ENCODE measurements at regions of chr1 and their contacts with region 1.

Region 1: GRCh38 chr1:205523891-205524793 is 19.7 kb downstream of the CDK18 start:
- DNase-seq: peak; percentile 62
- H3K4me3 ChIP-seq: no peak overlapping the region
- H3K27ac ChIP-seq: no peak overlapping the region
- H3K4me1 ChIP-seq: no peaks in the 10 kb centered on the region
- H3K27me3 ChIP-seq: peaks cover 0 to 4% of the 10 kb centered on the region in 2 experiments
- CTCF ChIP-seq: peak; percentile 70 to 80
- POLR2A ChIP-seq: no peak

Region 2: DNA sequence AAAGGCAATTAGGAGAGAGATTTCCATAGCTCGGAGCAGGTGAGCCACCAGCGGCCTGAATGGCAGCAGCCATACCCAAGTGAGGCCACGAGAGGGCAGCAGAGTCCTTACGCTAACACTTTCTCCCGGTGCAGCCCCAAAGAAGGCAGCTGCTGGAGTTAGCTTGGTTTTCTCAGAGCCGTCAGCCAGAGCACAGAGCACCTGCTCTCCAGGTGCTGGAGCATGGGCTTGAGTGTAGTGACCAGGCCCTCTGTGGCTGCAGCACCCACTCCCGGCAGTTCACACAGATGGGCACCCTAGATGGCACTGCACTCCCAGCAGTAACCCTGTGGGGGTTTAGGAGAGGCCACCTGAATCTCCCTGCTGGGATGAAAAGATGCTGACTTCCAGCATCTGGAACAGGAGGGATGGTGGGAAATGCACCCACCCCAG is 250.6 kb before region 1 on chr1:
- CTCF ChIA-PET with region 1: interaction called, 48 read pairs
- POLR2A ChIA-PET with region 1: no interaction called
- dilution Hi-C with region 1: no loop called
- intact Hi-C with region 1: no loop called
- DNase-seq: peak; percentile 69
- H3K4me3 ChIP-seq: no peak overlapping the region
- H3K27ac ChIP-seq: no peak overlapping the region
- H3K4me1 ChIP-seq: peaks cover 18% of the 10 kb centered on the region
- H3K27me3 ChIP-seq: no peaks in the 10 kb centered on the region
- CTCF ChIP-seq: peak; percentile 97 to 98
- POLR2A ChIP-seq: no peak

Region 3: DNA sequence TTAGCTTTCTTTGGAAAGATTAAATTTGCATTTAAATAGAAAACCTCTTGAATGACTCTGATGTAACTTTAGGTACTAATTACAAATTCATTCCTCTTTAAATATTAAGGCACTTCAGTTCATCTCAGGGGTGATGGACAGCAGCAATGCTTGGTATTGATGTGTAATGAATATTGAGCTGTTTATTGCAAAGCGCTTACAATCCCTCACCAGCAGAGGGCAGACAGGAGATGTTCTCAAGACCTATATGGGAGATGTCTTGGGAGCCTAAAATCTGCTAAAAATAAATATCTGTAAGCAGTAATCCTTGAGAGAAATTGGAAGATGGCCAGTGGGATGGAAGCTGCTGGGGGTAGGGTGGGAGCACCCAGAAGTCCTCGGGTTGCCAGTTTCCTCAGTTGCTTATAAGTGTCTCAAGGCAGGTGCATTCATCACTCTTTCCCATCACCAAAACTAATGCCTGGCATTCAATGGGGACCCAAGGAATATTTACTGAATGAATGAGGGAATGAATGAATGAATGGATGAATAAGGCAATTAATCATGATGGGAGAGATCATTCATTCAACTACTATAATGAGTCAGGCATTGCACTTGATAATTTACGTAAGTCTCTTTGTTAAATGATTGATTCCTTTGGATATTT is 169.8 kb before region 1 on chr1:
- CTCF ChIA-PET with region 1: interaction called, 213 read pairs
- POLR2A ChIA-PET with region 1: no interaction called
- dilution Hi-C with region 1: no loop called
- intact Hi-C with region 1: loop called (anchors 1 kb)
- DNase-seq: peak; percentile 63
- H3K4me3 ChIP-seq: no peak overlapping the region
- H3K27ac ChIP-seq: no peak overlapping the region
- H3K4me1 ChIP-seq: no peaks in the 10 kb centered on the region
- H3K27me3 ChIP-seq: peaks cover 4 to 30% of the 10 kb centered on the region in 2 experiments
- CTCF ChIP-seq: peak; percentile 66 to 69
- POLR2A ChIP-seq: no peak

Region 4: GRCh38 chr1:205440476-205441317 is 83.4 kb before region 1 on chr1:
- CTCF ChIA-PET with region 1: interaction called, 6 read pairs
- POLR2A ChIA-PET with region 1: no interaction called
- dilution Hi-C with region 1: no loop called
- intact Hi-C with region 1: loop called (anchors 5 kb)
- DNase-seq: no peak
- H3K4me3 ChIP-seq: no peak overlapping the region
- H3K27ac ChIP-seq: no peak overlapping the region
- H3K4me1 ChIP-seq: peaks cover 2% of the 10 kb centered on the region
- H3K27me3 ChIP-seq: peaks cover 18% of the 10 kb centered on the region in 2 experiments
- CTCF ChIP-seq: no peak
- POLR2A ChIP-seq: no peak

Region 5: DNA sequence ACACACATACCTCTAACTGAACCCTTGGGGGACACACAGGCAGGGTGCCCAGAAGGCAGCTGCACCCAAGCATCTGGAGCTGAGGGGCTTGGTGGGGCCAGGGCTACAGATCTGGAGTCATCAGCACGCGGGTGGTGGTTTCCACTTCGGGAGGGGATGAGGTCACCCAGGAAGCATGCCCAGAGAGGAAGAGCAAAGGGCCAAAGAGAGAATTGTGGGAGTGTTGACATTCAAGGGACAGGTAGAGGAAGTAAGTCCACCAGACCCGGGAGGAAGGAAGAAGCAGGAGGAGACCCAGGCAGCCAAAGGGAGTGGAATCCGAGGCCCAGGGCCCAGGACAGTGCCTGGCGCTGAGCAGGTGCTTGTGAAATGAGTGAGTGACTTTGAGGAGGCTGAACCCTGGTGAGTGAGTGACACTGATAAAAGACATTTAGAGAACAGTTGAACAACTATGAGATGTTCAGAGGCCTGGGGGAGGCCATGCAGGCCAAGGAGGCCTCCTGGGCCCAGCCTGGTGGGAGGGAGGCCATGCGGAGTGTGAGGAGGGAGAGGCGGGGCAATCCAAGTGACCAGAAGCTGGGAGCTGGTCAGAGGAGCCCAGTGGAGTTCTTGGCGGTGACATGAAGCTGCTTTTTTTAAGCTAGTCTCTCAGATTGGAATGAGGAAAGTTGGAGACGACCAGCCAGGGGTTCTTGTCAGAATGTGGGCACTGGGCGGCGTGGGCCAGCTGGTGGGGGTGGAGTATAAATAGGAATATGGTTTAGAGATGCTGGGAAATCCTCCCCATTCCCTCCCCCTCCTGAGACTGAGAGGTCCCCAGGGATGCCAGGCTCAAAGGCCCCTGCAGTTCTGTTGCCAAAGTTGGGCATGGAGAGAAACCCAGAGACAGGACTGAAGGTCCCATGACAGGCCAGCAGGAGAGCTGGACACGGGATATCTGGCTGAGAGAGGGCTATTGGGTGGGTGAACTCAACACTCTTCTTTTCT is 11.8 kb before region 1 on chr1:
- CTCF ChIA-PET with region 1: interaction called, 18 read pairs
- POLR2A ChIA-PET with region 1: no interaction called
- dilution Hi-C with region 1: no loop called
- intact Hi-C with region 1: no loop called
- DNase-seq: no peak
- H3K4me3 ChIP-seq: no peak overlapping the region
- H3K27ac ChIP-seq: no peak overlapping the region
- H3K4me1 ChIP-seq: no peaks in the 10 kb centered on the region
- H3K27me3 ChIP-seq: peaks cover 2% of the 10 kb centered on the region in 2 experiments
- CTCF ChIP-seq: no peak
- POLR2A ChIP-seq: no peak

Region 6: DNA sequence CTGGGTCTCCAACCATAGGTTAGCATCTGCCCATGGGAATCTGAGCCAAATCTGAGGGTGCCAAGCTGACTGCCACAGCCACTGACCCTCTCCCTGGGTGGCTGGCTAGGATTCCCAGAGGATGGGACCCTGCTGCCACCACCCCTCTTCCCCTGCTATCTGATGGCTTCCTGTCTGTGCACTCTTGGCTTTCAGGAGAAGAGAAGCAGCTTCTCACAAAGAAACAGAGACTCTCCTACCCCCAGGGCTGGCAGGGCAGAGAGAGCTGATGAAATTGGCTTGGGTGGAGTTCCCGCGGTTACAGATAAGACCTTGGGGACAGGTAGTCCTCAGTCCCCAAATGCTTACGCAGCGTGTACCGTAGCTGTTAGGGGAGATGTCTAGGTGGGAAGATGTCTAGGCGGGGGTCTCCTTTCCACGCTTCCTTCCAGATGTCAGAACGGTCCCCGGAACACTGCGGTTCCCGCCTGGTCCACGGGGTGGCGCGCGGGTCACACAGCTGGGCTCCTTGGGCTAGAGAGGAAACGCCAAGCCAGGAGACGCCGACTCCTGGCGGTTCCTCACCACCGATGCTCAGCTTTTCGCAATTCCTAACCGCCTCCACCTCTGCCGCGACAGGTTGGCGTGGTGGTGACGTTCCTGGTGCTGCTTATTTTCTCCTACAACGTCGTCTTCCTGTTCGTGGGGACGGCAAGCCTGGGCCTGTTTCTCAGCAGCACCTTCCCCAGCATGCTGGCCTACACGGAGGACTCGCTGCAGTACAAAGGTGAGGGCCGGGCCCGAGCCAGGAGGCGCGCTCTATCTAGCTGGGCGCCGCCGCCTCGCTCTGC is 67.6 kb after region 1 on chr1:
- CTCF ChIA-PET with region 1: interaction called, 40 read pairs
- POLR2A ChIA-PET with region 1: no interaction called
- dilution Hi-C with region 1: no loop called
- intact Hi-C with region 1: loop called (anchors 10 kb)
- DNase-seq: peak; percentile 83
- H3K4me3 ChIP-seq: peak overlapping the region in 1 of 3 experiments; percentile 11
- H3K27ac ChIP-seq: no peak overlapping the region
- H3K4me1 ChIP-seq: peaks cover 8% of the 10 kb centered on the region
- H3K27me3 ChIP-seq: no peaks in the 10 kb centered on the region
- CTCF ChIP-seq: peak; percentile 95 to 97
- POLR2A ChIP-seq: no peak

Region 7: GRCh38 chr1:205619376-205619775 is 95.2 kb after region 1 on chr1:
- CTCF ChIA-PET with region 1: no interaction called
- POLR2A ChIA-PET with region 1: no interaction called
- dilution Hi-C with region 1: no loop called
- intact Hi-C with region 1: no loop called
- DNase-seq: no peak
- H3K4me3 ChIP-seq: no peak overlapping the region
- H3K27ac ChIP-seq: no peak overlapping the region
- H3K4me1 ChIP-seq: peaks cover 2% of the 10 kb centered on the region
- H3K27me3 ChIP-seq: no peaks in the 10 kb centered on the region
- CTCF ChIP-seq: no peak
- POLR2A ChIP-seq: no peak

Measured in endothelial cell of umbilical vein (primary cell).